Activated T-helper 1 cell treated with anti-CD3 and anti-CD28 coated beads, Interleukin-12 subunit alpha, Interleukin-12 subunit beta, Interleukin-2, Interleukin-4 antibody, amounts not matched to agents 30 ng/mL and 10 ng/mL and 1 ng/mL, durations not matched to agents 14 hours and 24 hours and 36 hours (primary cell): ENCODE measurements at regions of chr14 and their contacts with region 1.

Region 1: GRCh38 chr14:94392510-94392935 is 4.1 kb upstream of the SERPINA1 start:
- DNase-seq: peak; percentile 42
- H3K4me3 Mint-ChIP-seq: no peak overlapping the region
- H3K27ac Mint-ChIP-seq: peak overlapping the region; percentile 18
- H3K4me1 Mint-ChIP-seq: peaks cover 46% of the 10 kb centered on the region
- H3K27me3 Mint-ChIP-seq: peaks cover 11% of the 10 kb centered on the region

Region 2: DNA sequence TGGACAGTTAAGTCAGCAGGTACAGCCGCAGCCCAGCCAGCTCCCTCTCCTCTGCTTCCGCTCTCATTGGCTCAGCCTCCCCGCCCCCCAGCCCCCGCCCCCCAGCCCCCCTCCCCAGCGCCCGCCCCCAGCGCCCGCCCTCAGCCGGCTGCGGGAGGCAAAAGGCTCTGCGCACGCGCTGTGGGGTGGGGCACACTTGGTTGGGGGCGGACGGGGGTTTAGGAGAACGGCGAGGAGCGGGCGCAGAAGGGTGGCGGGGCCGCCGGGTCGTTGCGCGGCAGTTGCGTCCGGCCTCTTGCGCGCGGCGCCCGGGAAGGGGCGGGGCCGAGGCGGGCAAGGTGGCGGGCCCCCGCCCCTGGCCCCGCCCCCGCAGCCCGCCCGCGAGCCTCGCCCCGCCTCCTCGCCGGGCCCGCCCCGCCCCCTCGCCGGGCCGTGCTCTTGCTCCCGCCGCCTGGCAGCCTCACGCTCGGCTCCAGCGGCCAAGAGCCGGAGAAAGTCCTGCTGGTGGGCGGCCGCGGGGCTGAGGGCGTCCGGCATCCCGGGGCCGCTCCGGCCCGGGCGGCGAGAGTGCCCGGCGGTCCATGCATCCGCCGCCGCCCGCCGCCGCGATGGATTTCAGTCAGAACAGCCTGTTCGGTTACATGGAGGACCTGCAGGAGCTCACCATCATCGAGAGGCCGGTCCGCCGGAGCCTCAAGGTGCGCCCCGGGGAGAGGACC is 218.5 kb before region 1 on chr14 and contains the start of gene PPP4R4:
- intact Hi-C with region 1: loop called (anchors 10 kb)
- DNase-seq: peak; percentile 85
- H3K4me3 Mint-ChIP-seq: peak within 1 kb of the TSS; percentile 83
- H3K27ac Mint-ChIP-seq: peak within 1 kb of the TSS; percentile 81
- H3K4me1 Mint-ChIP-seq: peaks cover 22% of the 10 kb centered on the region
- H3K27me3 Mint-ChIP-seq: peaks cover 49% of the 10 kb centered on the region
- total RNA-seq, gene PPP4R4: 2.2 and 2.4 TPM in 2 replicates

Region 3: GRCh38 chr14:94345337-94346064 is 47.0 kb before region 1 on chr14:
- intact Hi-C with region 1: loop called (anchors 1 kb)
- DNase-seq: no peak
- H3K4me3 Mint-ChIP-seq: no peak overlapping the region
- H3K27ac Mint-ChIP-seq: no peak overlapping the region
- H3K4me1 Mint-ChIP-seq: peaks cover 13% of the 10 kb centered on the region
- H3K27me3 Mint-ChIP-seq: peaks cover 6% of the 10 kb centered on the region

Region 4: DNA sequence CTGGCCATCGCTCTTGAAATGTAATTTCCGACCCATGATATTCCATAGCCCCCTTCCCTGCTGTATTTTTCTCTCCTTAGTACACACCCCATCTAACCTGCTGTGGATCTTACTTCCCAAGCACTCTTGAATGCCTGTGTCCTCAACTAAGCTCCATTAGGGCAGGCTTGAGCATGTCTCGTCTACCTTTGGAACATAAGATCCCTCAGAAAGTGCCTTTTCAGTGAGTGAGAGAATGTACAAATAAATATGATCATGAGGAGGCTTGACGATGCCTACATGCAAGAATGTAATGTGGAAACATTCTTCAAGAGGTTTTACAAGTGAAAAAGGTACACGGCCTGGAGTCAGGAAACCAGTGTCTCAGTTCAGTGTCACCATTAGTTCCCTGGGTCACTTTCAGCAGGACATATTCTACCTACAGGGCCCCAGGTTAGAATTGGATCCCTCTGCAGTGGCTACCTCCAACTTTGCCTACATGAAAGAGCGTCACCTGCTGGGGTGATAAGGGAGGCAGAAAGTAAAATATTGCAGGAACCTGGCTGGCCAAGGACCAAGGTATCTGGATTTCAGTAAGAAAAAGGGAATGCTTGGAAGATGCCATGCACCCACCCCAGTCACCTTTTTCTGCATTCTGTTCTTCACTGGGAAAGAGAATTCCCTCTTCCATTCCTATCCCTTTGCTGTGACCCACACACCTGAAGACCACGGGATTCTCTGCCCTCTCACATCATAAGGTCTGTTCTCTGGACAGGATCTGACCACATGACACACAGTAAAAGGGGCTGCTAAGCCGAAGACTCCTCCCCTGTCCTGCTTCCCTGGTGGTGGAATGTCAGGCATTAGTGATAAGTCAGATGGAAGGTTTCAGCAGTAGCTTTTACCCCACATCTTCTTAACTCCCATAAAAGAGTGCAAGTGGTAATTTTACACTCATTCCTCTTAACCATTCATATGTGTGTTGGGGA is 20.4 kb after region 1 on chr14:
- intact Hi-C with region 1: no loop called
- DNase-seq: no peak
- H3K4me3 Mint-ChIP-seq: no peak overlapping the region
- H3K27ac Mint-ChIP-seq: no peak overlapping the region
- H3K4me1 Mint-ChIP-seq: no peaks in the 10 kb centered on the region
- H3K27me3 Mint-ChIP-seq: peaks cover 12% of the 10 kb centered on the region